ENCODE measurements at regions of chr16 and their contacts with region 1.

Region 1: DNA sequence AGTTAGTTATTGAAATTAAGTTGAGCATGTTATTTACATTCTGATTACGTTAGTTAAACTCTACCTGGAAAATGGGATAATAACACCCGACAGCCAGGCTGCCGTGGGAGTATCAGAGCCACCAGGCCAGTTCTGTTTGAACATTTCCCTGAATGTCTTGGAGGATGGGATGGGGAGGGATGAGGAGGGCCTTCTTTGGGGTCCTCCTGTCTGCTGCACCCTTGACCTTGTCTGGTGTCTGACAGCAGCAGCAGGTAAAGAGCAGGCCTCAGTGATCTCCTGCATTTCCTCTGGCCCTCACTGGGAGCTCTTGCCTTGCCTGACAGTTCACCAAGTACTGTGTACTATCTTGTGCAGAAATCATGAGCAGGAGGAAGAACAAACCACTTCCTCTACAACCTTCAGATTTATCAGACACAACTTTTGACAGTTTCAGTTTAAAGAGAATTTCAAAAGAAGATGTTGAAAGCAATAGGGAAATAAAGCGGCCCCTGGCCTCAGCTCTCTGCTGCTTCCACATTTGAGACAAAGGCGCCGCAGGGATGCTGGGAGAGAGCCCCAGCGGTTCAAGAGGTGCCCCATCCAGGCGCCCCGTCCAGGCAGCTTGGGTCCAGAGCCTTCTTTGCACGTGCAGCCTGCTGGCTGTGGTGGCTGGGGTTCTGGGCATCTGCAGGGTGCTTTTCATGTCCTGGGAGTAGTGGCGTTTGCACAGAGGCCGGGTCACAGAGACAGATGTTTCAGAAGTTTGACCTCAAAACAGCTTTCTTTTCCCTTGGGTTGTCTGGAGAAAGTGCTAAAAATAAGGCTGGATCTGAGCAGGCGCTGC is 25.3 kb downstream of the CMIP start:
- DNase-seq: peak; percentile 62
- ATAC-seq: peak; percentile 98
- H3K4me3 Mint-ChIP-seq: peak overlapping the region; percentile 73
- H3K27ac Mint-ChIP-seq: peak overlapping the region; percentile 94
- H3K4me1 Mint-ChIP-seq: peaks cover 47% of the 10 kb centered on the region
- H3K27me3 Mint-ChIP-seq: no peaks in the 10 kb centered on the region

Region 2: GRCh38 chr16:81444448-81445121 is 25.3 kb before region 1 on chr16 and contains the start of gene CMIP:
- POLR2A ChIA-PET with region 1: interaction called, 24 read pairs
- DNase-seq: peak; percentile 91
- ATAC-seq: peak; percentile 82
- H3K4me3 Mint-ChIP-seq: peak within 1 kb of the TSS; percentile 91
- H3K27ac Mint-ChIP-seq: peak within 1 kb of the TSS; percentile 90
- H3K4me1 Mint-ChIP-seq: peaks cover 36% of the 10 kb centered on the region
- H3K27me3 Mint-ChIP-seq: peaks cover 36% of the 10 kb centered on the region
- total RNA-seq, gene CMIP: 65.4 to 76.7 TPM

Region 3: GRCh38 chr16:81451753-81452680 is 17.9 kb before region 1 on chr16:
- POLR2A ChIA-PET with region 1: interaction called, 24 read pairs
- DNase-seq: peak; percentile 50
- ATAC-seq: peak; percentile 93
- H3K4me3 Mint-ChIP-seq: peak overlapping the region; percentile 80
- H3K27ac Mint-ChIP-seq: peak overlapping the region; percentile 87
- H3K4me1 Mint-ChIP-seq: peaks cover 66% of the 10 kb centered on the region
- H3K27me3 Mint-ChIP-seq: no peaks in the 10 kb centered on the region

Region 4: DNA sequence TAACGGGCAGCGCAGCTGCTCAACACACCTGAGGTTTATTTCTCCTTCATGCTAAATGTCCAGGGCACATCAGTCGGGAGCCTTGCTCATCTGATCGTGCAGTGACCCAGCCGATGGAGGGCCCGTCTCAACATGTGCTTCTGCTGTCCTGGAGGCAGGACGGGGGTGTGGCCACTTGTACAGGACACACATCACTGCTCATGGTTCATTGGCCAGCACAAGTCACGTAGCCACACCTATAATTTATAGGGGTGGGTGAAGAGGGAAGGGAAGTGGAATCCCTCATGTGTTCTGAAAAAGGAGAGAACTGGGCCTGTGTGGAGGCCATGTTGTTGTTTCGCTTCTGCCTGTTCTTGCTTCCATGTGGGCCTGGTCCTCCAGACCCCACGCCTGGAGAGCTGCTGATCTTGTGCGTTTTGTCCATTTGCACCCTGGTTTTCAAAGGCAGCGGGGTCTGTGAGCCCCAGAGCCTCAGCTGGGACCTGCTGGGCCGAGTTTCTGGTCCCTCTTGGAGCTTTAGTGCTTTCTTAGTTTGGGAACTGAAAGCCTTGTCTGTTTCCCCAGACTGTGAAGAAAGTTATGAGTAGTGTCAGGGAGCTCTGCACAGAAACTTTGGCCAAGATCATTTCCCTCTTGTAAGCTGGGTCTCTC is 35.2 kb after region 1 on chr16:
- POLR2A ChIA-PET with region 1: no interaction called
- DNase-seq: no peak
- ATAC-seq: no peak
- H3K4me3 Mint-ChIP-seq: no peak overlapping the region
- H3K27ac Mint-ChIP-seq: no peak overlapping the region
- H3K4me1 Mint-ChIP-seq: peaks cover 21% of the 10 kb centered on the region
- H3K27me3 Mint-ChIP-seq: no peaks in the 10 kb centered on the region

Region 5: GRCh38 chr16:81521151-81521626 is 51.3 kb after region 1 on chr16:
- POLR2A ChIA-PET with region 1: interaction called, 15 read pairs
- DNase-seq: peak; percentile 86
- ATAC-seq: peak; percentile 85
- H3K4me3 Mint-ChIP-seq: peak overlapping the region; percentile 53
- H3K27ac Mint-ChIP-seq: peak overlapping the region; percentile 86
- H3K4me1 Mint-ChIP-seq: peaks cover 63% of the 10 kb centered on the region
- H3K27me3 Mint-ChIP-seq: no peaks in the 10 kb centered on the region